ENCODE measurements at regions of chr5 and their contacts with region 1.

Region 1: DNA sequence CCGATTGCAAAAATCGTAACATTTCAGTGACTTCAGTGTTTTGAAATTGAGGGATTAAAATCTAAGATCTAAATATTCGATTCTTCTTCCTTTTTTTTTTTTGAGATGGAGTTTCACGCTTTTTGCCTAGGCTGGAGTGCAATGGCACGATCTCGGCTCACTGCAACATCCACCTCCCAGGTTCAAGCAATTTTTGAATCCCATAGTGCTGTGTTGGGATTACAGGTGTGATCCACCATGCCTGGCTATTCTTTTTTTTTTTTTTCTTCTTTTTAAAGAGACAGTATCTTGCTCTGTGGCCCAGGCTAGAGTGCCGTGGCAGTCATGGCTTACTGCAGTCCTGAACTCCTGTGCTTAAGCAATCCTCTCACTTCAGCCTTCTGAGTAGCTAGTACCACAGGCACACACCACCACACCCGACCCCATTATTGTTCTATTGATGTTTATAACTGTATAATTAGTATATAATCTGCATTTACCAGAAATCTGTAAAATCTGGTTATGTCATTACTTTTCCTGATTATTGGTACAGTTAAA is 42.7 kb downstream of the NSD1 start:
- DNase-seq: no peak
- ATAC-seq: peak; percentile 61
- H3K4me3 ChIP-seq: no peak overlapping the region
- H3K27ac ChIP-seq: peak overlapping the region; percentile 52
- H3K4me1 ChIP-seq: peaks cover 31% of the 10 kb centered on the region
- H3K27me3 ChIP-seq: no peaks in the 10 kb centered on the region
- CTCF ChIP-seq: no peak
- EP300 ChIP-seq: no peak
- POLR2A ChIP-seq: no peak
- RAD21 ChIP-seq: no peak

Region 2: DNA sequence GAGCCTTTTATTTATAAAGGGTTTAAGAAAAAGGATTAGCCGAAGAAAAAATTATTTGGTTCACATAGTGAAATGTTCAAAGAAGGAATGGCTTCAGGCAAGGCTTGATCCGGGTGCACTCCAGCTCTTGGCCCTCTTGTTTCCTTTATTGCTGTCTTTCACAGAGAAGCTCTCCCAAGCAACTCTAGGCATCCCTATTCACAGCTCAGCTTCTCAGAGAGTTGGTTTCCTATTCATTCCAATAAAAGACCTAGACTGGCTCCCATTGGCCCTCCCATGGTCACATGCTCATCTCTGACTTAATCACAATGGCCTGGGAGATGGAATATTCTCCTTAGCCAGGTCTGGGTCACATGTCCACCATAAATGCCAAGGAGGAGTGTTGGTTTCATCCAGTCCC is 98.9 kb before region 1 on chr5:
- CTCF ChIA-PET with region 1: no interaction called
- POLR2A ChIA-PET with region 1: no interaction called
- RAD21 ChIA-PET with region 1: no interaction called
- SMC1A ChIA-PET with region 1: no interaction called
- in situ Hi-C with region 1: no loop called
- intact Hi-C with region 1: no loop called
- DNase-seq: no peak
- ATAC-seq: no peak
- H3K4me3 ChIP-seq: no peak overlapping the region
- H3K27ac ChIP-seq: no peak overlapping the region
- H3K4me1 ChIP-seq: no peaks in the 10 kb centered on the region
- H3K27me3 ChIP-seq: no peaks in the 10 kb centered on the region
- CTCF ChIP-seq: no peak
- EP300 ChIP-seq: no peak
- POLR2A ChIP-seq: no peak
- RAD21 ChIP-seq: no peak

Region 3: DNA sequence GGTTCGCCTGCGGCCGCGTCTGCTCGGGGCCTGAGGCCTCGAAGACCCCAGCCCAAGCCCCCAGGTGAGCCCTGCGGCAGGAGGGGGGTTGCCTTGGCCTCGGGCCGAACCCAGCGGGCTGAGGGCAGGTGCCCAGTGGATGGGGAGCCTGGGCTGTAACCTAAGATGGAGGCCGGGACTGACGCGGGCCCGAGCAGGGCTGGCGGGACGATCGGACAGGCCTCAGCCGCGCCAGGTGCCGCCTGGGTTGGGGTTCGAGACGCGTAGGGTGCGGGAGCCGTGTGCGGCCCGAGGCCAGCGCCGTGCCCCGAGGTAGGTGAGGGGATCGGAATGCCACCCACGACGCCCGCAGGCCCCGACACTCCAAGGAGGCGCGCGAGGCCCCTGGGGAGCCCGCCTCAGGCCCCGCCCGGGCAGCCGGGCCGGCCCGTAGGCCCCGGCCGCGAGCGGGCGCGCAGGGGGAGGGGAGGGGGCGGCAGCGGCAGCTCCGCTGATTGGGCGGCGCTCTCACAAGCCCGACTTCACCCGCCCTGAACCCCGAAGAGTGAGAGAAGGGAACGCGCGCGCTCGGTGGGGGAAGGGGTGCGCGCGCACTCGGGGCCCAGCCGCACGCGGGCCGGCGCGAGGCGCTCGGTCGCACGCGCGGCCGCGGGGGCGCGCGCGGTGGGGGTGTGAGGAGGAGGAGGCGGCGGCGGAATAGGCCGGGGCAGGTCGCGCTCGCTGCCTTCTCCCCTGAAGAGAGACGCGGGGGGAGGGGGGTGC is 43.0 kb before region 1 on chr5 and contains the start of gene NSD1:
- CTCF ChIA-PET with region 1: interaction called, 5 read pairs
- POLR2A ChIA-PET with region 1: interaction called, 3 read pairs
- RAD21 ChIA-PET with region 1: no interaction called
- SMC1A ChIA-PET with region 1: interaction called, 13 read pairs
- in situ Hi-C with region 1: no loop called
- intact Hi-C with region 1: no loop called
- DNase-seq: peak; percentile 42
- ATAC-seq: peak; percentile 79
- H3K4me3 ChIP-seq: peak within 1 kb of the TSS; percentile 78
- H3K27ac ChIP-seq: peak within 1 kb of the TSS; percentile 83
- H3K4me1 ChIP-seq: peaks cover 27% of the 10 kb centered on the region
- H3K27me3 ChIP-seq: no peaks in the 10 kb centered on the region
- CTCF ChIP-seq: no peak
- EP300 ChIP-seq: no peak
- POLR2A ChIP-seq: peak; percentile 86
- RAD21 ChIP-seq: no peak
- polyA plus RNA-seq, gene NSD1: 7.0 to 13.1 TPM

Region 4: GRCh38 chr5:177154003-177154643 is 22.1 kb before region 1 on chr5:
- CTCF ChIA-PET with region 1: interaction called, 4 read pairs
- POLR2A ChIA-PET with region 1: interaction called, 4 read pairs
- RAD21 ChIA-PET with region 1: no interaction called
- SMC1A ChIA-PET with region 1: interaction called, 8 read pairs
- in situ Hi-C with region 1: no loop called
- intact Hi-C with region 1: loop called (anchors 2 kb)
- DNase-seq: no peak
- ATAC-seq: no peak
- H3K4me3 ChIP-seq: no peak overlapping the region
- H3K27ac ChIP-seq: no peak overlapping the region
- H3K4me1 ChIP-seq: peaks cover 16% of the 10 kb centered on the region
- H3K27me3 ChIP-seq: no peaks in the 10 kb centered on the region
- CTCF ChIP-seq: no peak
- EP300 ChIP-seq: no peak
- POLR2A ChIP-seq: no peak
- RAD21 ChIP-seq: no peak